ENCODE measurements at regions of chr4 and their contacts with region 1.

Region 1: DNA sequence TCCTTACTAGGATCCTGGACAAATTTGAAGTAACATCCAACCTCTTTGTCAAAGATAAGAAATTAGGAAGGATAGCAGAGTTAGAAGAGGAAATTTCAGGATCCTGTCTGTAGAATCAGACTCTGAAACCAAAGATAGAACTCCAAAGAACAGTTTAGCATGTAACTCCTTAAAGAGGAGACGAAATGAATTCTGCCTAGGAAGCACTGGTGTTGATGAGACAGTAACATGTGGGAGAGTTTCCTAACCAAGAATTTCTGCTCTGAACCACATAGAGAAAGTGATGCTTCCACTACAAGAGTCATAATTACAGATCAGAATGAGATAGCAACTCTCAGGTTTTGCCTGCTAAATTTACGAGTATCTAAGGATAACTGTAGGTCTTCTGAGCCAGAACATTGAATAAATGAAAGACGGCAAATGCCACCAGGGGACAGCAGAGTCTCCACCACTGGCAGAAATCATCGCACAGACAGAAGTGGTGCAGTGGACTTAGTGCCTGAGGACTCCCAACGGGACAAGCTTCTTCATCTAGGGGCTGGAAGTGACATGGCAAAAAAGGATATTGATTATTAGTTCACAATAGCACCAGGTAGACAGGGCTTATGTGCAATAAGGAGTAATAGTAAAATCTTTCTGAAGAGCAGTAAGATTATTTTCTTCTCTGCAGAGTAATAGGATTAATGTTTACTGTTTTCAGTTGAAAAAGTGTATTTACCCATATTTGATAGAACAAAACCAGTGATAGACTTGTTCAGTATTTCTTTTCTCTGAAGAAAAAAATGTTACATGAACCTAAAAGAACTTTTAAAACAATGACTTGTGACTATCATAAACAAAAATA is 6.7 kb upstream of the PPID start:
- DNase-seq: peak; percentile 32
- H3K4me3 Mint-ChIP-seq: no peak overlapping the region
- H3K27ac Mint-ChIP-seq: no peak overlapping the region
- H3K4me1 Mint-ChIP-seq: peaks cover 33% of the 10 kb centered on the region
- H3K27me3 Mint-ChIP-seq: peaks cover 18% of the 10 kb centered on the region

Region 2: GRCh38 chr4:158850800-158851644 is 121.1 kb after region 1 on chr4:
- intact Hi-C with region 1: loop called (anchors 1 kb)
- DNase-seq: no peak
- H3K4me3 Mint-ChIP-seq: no peak overlapping the region
- H3K27ac Mint-ChIP-seq: no peak overlapping the region
- H3K4me1 Mint-ChIP-seq: peaks cover 14% of the 10 kb centered on the region
- H3K27me3 Mint-ChIP-seq: no peaks in the 10 kb centered on the region

Region 3: GRCh38 chr4:158965226-158965625 is 235.3 kb after region 1 on chr4:
- intact Hi-C with region 1: no loop called
- DNase-seq: no peak
- H3K4me3 Mint-ChIP-seq: no peak overlapping the region
- H3K27ac Mint-ChIP-seq: no peak overlapping the region
- H3K4me1 Mint-ChIP-seq: no peaks in the 10 kb centered on the region
- H3K27me3 Mint-ChIP-seq: peaks cover 7% of the 10 kb centered on the region

Region 4: GRCh38 chr4:159175085-159175988 is 445.4 kb after region 1 on chr4:
- intact Hi-C with region 1: loop called (anchors 1 kb)
- DNase-seq: peak; percentile 51
- H3K4me3 Mint-ChIP-seq: no peak overlapping the region
- H3K27ac Mint-ChIP-seq: peak overlapping the region; percentile 49
- H3K4me1 Mint-ChIP-seq: peaks cover 64% of the 10 kb centered on the region
- H3K27me3 Mint-ChIP-seq: no peaks in the 10 kb centered on the region